Endothelial cell of umbilical vein (primary cell): ENCODE measurements at regions of chr4 and their contacts with region 1.

Region 1: GRCh38 chr4:145061318-145061920 is 36.6 kb downstream of the ANAPC10 start:
- DNase-seq: peak; percentile 73
- H3K4me3 ChIP-seq: no peak overlapping the region
- H3K27ac ChIP-seq: no peak overlapping the region
- H3K4me1 ChIP-seq: peaks cover 6% of the 10 kb centered on the region
- H3K27me3 ChIP-seq: no peaks in the 10 kb centered on the region
- CTCF ChIP-seq: peak in 1 of 2 donors; percentile 13
- POLR2A ChIP-seq: no peak

Region 2: GRCh38 chr4:144575181-144575580 is 486.2 kb before region 1 on chr4:
- CTCF ChIA-PET with region 1: no interaction called
- POLR2A ChIA-PET with region 1: no interaction called
- dilution Hi-C with region 1: no loop called
- intact Hi-C with region 1: loop called (anchors 10 kb)
- DNase-seq: peak; percentile 57
- H3K4me3 ChIP-seq: no peak overlapping the region
- H3K27ac ChIP-seq: no peak overlapping the region
- H3K4me1 ChIP-seq: peaks cover 26% of the 10 kb centered on the region
- H3K27me3 ChIP-seq: no peaks in the 10 kb centered on the region
- CTCF ChIP-seq: peak; percentile 43 to 46
- POLR2A ChIP-seq: no peak

Region 3: DNA sequence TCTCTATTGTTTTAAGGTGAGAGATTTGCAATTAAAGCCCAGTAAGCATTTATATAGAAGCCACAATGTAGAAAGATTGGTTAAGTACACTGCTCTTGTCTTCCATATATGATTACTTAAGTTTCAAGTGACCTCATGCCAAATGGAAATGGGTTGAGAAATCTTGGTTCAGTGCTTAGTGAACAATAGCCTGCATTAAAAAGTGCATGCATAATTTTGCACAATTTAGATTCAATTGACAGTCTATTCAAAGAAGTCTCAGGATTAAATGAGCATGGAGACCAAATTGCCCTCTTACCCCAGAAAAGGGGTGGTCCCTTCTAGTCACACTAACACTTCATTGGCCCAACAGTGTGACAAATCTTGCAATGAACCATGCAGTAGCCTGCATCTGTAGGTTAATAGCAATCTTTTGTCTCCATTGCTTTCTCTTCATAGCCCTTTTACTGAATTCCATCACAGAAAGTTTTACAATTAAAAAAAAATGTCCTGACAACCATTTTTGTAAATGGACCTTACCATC is 321.8 kb before region 1 on chr4:
- CTCF ChIA-PET with region 1: interaction called, 3 read pairs
- POLR2A ChIA-PET with region 1: no interaction called
- dilution Hi-C with region 1: no loop called
- intact Hi-C with region 1: loop called (anchors 5 kb)
- DNase-seq: no peak
- H3K4me3 ChIP-seq: no peak overlapping the region
- H3K27ac ChIP-seq: no peak overlapping the region
- H3K4me1 ChIP-seq: no peaks in the 10 kb centered on the region
- H3K27me3 ChIP-seq: no peaks in the 10 kb centered on the region
- CTCF ChIP-seq: no peak
- POLR2A ChIP-seq: no peak

Region 4: DNA sequence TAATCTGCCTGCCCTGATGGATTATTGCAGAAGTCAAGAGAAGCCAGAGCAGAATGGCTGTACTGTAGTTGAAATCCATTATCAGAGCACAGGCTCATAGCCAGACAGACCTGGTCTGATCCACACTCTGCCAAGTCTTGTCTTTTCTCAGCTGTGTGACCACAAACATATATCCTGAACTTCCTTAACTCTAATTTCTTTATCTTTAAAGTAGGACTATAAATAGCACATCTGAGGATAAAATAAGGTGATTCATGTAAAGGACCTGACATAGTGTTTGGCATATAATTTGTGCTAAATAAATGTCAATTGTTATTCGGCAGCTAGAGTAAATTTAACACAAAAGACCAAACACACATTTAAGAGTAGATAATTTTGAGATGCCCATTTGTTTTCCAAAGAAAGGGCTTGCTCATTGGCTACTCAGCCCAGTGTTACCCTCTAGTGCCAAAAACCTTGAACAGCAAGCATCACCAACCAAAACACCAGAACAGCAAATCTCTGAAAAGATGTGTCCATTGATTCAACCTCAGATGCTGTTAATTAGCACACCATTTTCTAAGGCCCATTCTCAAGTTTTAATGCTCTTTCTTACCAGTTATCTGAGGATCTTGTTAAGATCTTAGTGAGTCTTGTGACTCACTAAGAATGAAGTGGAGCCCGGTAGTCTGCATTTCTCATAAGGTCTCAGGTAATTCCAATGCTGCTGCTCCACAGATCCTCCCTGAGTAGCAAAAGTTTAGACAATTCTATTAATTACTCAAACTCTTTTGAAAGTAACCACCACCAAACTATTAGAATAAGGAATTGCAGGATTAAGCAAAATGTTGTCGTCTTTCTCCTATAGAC is 306.6 kb before region 1 on chr4:
- CTCF ChIA-PET with region 1: interaction called, 9 read pairs
- POLR2A ChIA-PET with region 1: no interaction called
- dilution Hi-C with region 1: no loop called
- intact Hi-C with region 1: loop called (anchors 2 kb)
- DNase-seq: peak; percentile 73
- H3K4me3 ChIP-seq: no peak overlapping the region
- H3K27ac ChIP-seq: no peak overlapping the region
- H3K4me1 ChIP-seq: peaks cover 6% of the 10 kb centered on the region
- H3K27me3 ChIP-seq: no peaks in the 10 kb centered on the region
- CTCF ChIP-seq: peak; percentile 18 to 30
- POLR2A ChIP-seq: no peak

Region 5: DNA sequence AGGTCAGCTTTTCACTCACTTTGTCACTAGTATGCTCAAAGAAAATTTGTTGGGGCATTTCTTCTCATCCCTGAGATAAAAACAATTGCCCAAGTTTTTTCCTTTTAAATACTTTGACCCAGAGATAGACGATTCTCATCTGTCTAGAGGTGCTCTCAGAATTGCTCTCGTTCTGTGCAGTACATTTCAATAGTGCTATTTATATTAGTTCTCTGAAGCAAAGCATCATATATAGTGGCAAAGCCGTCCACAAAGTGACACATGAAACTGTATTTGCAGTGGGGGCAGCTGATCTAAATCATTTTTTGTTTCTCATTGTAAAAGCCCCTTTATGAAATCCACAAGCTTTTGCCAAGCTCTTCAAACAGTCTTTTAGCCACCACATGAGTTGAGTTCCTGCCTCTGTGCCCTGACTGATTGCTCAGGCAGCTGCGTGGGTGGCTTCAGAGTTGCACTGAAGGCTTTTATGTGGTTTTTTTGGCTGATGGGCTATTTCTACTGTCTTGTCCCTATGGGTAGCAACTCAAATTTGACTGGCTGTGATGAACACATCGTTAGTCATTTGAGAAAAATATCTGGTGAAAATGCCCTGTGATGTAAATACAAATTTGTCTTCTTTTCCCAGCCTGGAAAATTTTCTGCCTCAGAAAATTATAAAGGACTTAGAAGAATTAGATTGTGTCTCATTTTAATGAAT is 238.1 kb after region 1 on chr4:
- CTCF ChIA-PET with region 1: no interaction called
- POLR2A ChIA-PET with region 1: no interaction called
- dilution Hi-C with region 1: no loop called
- intact Hi-C with region 1: no loop called
- DNase-seq: no peak
- H3K4me3 ChIP-seq: no peak overlapping the region
- H3K27ac ChIP-seq: no peak overlapping the region
- H3K4me1 ChIP-seq: no peaks in the 10 kb centered on the region
- H3K27me3 ChIP-seq: peaks cover 0 to 4% of the 10 kb centered on the region in 2 experiments
- CTCF ChIP-seq: no peak
- POLR2A ChIP-seq: no peak